Transverse colon (tissue), 4 donors: ENCODE measurements at regions of chr19 and their contacts with region 1.

Region 1: GRCh38 chr19:40716655-40717324 is at the starts of genes COQ8B and ITPKC:
- DNase-seq: peak; percentile 100
- H3K4me3 ChIP-seq: peak within 1 kb of the TSS; percentile 68 to 96 (median 88)
- H3K27ac ChIP-seq: peak within 1 kb of the TSS; percentile 94 to 99 (median 98)
- H3K4me1 ChIP-seq: peaks cover 18 to 64% (median 53%) of the 10 kb centered on the region in 4 donors
- H3K27me3 ChIP-seq: no peaks in the 10 kb centered on the region
- CTCF ChIP-seq: peak in 2 of 5 experiments; percentile 21 to 54
- EP300 ChIP-seq: peak; percentile 72
- POLR2A ChIP-seq: peak; percentile 86
- total RNA-seq, gene COQ8B: 15.3 to 41.2 (median 36.5) TPM
- total RNA-seq, gene ITPKC: 14.7 to 56.1 (median 33.8) TPM

Region 2: GRCh38 chr19:40690693-40691420 is 25.9 kb before region 1 on chr19:
- in situ Hi-C with region 1: no loop called
- intact Hi-C with region 1: no loop called
- DNase-seq: peak; percentile 96
- H3K4me3 ChIP-seq: peak overlapping the region; percentile 9 to 65 (median 58)
- H3K27ac ChIP-seq: peak overlapping the region; percentile 81 to 86 (median 84)
- H3K4me1 ChIP-seq: peaks cover 13 to 24% (median 18%) of the 10 kb centered on the region in 4 donors
- H3K27me3 ChIP-seq: no peaks in the 10 kb centered on the region
- CTCF ChIP-seq: no peak
- EP300 ChIP-seq: no peak
- POLR2A ChIP-seq: peak; percentile 44

Region 3: DNA sequence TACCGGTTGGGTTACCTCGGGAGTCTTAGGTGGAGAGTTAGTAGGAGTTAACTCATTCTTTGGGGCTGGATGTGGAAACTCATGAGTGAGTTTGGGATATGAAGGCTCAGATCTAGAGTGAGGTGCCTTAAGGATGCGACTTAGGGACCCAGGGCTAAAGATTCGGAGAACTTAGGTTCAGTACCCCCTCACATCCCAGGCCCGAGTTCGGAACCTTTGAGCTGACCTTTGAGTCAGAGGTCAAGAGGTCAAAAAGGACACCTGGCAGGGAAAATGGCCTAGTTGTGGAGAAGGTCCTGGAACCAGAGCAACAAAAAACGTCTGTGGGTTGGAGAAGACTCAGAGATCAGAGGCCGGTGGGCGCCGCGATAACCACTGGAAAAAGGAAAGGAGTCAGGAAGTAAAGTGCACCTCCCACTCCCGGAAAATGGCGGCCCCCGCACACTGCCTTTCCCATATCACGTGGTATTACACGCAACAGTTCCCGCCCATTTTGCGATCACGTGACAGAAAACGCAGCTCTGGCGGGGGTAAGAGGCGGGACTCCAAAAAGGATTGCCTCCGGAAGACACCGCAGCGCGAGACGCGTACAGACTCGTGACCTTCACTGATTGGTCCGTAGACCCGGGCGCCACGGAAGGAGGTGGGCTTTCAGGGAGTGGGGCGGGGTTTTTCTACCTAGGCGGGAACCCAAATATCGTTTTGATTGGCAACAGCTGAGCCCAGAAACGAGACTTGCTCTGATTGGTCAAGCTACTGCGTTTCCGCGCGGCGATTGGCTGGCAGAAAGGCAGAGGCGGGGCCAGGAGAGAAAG is 33.5 kb after region 1 on chr19 and contains the start of gene ACTMAP:
- in situ Hi-C with region 1: loop called in 1 of 4 experiments (anchors 5 kb)
- intact Hi-C with region 1: no loop called
- DNase-seq: peak; percentile 100
- H3K4me3 ChIP-seq: peak within 1 kb of the TSS; percentile 52 to 67 (median 64)
- H3K27ac ChIP-seq: peak within 1 kb of the TSS; percentile 91 to 99 (median 96)
- H3K4me1 ChIP-seq: peaks cover 24 to 45% (median 41%) of the 10 kb centered on the region in 4 donors
- H3K27me3 ChIP-seq: no peaks in the 10 kb centered on the region
- CTCF ChIP-seq: peak in 1 of 5 experiments; percentile 19
- EP300 ChIP-seq: no peak
- POLR2A ChIP-seq: peak; percentile 67
- total RNA-seq, gene ACTMAP: 8.3 to 29.1 (median 12.1) TPM

Region 4: GRCh38 chr19:40762754-40763470 is 46.1 kb after region 1 on chr19:
- in situ Hi-C with region 1: no loop called
- intact Hi-C with region 1: no loop called
- DNase-seq: no peak
- H3K4me3 ChIP-seq: no peak overlapping the region
- H3K27ac ChIP-seq: no peak overlapping the region
- H3K4me1 ChIP-seq: no peaks in the 10 kb centered on the region
- H3K27me3 ChIP-seq: no peaks in the 10 kb centered on the region
- CTCF ChIP-seq: no peak
- EP300 ChIP-seq: no peak
- POLR2A ChIP-seq: no peak

Region 5: DNA sequence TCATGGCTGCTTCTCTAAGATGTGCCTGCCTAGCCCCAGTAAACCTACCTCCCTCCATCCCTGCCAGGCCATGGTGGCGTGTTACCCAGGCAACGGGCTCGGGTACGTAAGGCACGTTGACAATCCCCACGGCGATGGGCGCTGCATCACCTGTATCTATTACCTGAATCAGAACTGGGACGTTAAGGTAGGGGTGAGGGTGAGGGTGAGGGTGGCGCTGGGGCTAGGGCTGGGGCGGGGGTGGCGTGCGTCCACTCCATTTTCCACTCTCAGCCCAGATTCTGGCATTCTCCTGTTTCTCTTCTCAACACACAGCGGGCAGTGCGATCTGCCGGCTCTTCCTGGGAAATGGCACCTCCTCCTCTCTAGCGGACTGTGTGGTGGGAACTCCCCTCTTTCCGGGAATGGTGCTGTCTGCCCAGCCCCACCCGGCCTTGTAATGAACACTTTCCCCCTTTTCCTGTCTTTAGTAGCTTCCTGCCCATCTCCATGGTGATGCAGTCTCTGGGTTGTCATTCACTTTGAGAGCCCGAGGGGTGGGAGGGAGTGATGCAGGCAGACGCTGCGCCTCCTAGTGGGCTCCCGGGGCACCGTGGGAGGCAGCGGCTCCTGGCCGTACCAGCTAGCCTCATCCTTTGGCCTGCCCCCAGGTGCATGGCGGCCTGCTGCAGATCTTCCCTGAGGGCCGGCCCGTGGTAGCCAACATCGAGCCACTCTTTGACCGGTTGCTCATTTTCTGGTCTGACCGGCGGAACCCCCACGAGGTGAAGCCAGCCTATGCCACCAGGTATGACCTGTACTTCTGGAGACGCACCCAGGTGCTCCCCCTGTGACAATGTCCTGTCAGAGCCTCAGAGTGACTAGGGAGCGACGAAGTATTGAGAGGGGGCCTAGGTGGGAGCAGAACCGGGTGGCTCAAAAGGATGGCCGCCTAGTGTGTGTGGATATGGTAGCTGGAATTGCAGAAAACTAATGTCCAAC is 90.0 kb after region 1 on chr19:
- in situ Hi-C with region 1: loop called in 1 of 4 experiments (anchors 25 kb)
- intact Hi-C with region 1: loop called (anchors 10 kb)
- DNase-seq: peak; percentile 76
- H3K4me3 ChIP-seq: no peak overlapping the region
- H3K27ac ChIP-seq: peak overlapping the region; percentile 91 to 97 (median 96)
- H3K4me1 ChIP-seq: peaks cover 54 to 77% (median 62%) of the 10 kb centered on the region in 4 donors
- H3K27me3 ChIP-seq: no peaks in the 10 kb centered on the region
- CTCF ChIP-seq: peak; percentile 70 to 82 (median 74)
- EP300 ChIP-seq: no peak
- POLR2A ChIP-seq: no peak